ENCODE measurements at regions of chr3 and their contacts with region 1.

Region 1: DNA sequence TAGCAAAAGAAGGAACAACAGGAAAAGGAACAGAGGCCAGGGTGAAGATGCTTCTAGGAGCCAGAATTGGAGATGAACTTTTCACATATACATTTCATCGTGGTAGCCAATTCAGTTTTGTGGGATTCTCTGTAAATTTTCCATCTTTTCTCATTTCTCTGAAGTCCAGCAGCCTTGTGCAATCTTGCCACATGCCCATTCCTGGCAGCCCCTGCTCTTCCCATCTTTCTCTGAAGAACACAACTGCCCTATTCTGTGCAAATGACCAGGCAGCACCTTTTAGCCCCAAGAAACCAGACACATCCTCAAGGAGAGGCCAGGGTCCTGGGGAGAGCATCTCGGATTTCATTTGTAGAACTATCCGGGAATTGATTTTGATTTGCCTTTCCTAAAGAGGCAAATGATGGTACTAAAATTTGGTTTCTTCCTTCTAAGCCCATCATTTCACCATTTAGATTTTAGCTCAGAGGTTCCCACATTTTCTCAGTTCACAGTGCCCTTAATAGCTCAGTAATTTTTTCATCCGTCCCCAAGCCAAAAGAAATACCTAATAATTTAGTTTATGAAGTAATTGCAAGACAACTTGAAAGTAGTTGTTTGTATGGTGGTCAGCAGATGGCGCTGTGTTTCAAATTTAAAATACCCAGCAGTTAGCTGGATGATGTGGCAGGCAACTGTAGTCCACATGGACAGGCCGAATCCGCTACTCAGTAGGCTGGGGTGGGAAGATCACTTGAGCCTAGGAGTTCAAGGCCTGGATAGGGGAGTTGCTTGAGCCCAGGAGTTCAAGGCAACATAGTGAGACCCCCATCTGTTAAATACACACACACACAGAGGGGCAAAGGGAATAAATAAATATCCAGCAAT is 61.3 kb upstream of the ACKR4 start:
- DNase-seq: peak in 4 of 5 donors; percentile 49 to 66 (median 62)
- ATAC-seq: peak in 3 of 4 donors; percentile 88 to 90 (median 88)
- H3K4me3 ChIP-seq: no peak overlapping the region
- H3K27ac ChIP-seq: peak overlapping the region in 1 of 12 donors; percentile 26
- H3K4me1 ChIP-seq: peaks cover 0 to 7% (median 0%) of the 10 kb centered on the region in 12 donors
- H3K27me3 ChIP-seq: no peaks in the 10 kb centered on the region
- CTCF ChIP-seq: peak; percentile 56 to 78 (median 70)
- POLR2A ChIP-seq: no peak

Region 2: GRCh38 chr3:132641837-132642538 is 106.2 kb after region 1 on chr3:
- intact Hi-C with region 1: loop called (anchors 1 to 2 kb)
- DNase-seq: no peak
- ATAC-seq: peak in 2 of 4 donors; percentile 57 to 76
- H3K4me3 ChIP-seq: no peak overlapping the region
- H3K27ac ChIP-seq: no peak overlapping the region
- H3K4me1 ChIP-seq: peaks cover 0 to 6% (median 0%) of the 10 kb centered on the region in 12 donors
- H3K27me3 ChIP-seq: no peaks in the 10 kb centered on the region
- CTCF ChIP-seq: peak; percentile 65 to 90 (median 82)
- POLR2A ChIP-seq: no peak